ENCODE measurements at regions of chr16 and their contacts with region 1.

Region 1: GRCh38 chr16:11133344-11133943 is 122.6 kb downstream of the SOCS1 start:
- DNase-seq: peak; percentile 90
- H3K4me3 ChIP-seq: no peak overlapping the region
- H3K27ac ChIP-seq: peak overlapping the region; percentile 86
- H3K27me3 ChIP-seq: no peaks in the 10 kb centered on the region
- CTCF ChIP-seq: no peak

Region 2: DNA sequence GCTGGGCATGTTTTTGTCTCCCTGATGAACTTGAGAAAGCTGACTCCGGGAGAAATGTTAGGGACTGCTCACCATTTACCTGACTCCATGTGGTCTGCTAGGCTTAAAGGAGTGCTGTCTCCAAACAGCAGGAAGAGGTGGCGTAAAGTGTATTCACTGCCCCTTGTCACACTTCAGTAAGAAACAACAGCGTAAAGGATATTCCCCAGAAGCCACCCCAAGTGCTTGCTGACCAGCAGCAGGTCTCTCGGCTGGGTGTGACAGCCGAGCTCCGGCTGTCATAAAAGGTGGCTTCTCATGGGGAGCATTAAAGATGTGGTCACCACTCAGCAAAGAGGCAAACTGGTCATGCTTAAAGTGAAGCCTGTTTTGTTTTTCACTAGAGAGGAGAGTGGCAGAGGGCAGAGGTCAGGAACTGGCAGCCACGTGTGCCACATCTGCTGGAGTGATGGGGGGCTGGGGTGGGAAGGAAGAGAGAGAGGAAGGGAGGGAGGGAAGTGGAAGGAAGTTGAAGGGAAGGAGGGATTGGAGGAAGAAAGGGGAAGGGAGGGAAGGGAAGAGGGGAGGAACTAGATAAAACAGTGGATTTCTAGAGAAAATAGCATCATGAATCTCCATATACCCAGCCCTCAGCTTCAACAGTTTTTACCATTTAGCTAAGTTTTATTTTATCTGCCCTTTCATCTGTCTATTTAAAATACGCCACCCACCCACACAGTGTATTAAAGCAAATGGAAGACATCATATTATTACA is 69.8 kb before region 1 on chr16:
- CTCF ChIA-PET with region 1: no interaction called
- POLR2A ChIA-PET with region 1: interaction called, 18 read pairs
- DNase-seq: no peak
- H3K4me3 ChIP-seq: no peak overlapping the region
- H3K27ac ChIP-seq: peak overlapping the region; percentile 21
- H3K27me3 ChIP-seq: no peaks in the 10 kb centered on the region
- CTCF ChIP-seq: no peak

Region 3: DNA sequence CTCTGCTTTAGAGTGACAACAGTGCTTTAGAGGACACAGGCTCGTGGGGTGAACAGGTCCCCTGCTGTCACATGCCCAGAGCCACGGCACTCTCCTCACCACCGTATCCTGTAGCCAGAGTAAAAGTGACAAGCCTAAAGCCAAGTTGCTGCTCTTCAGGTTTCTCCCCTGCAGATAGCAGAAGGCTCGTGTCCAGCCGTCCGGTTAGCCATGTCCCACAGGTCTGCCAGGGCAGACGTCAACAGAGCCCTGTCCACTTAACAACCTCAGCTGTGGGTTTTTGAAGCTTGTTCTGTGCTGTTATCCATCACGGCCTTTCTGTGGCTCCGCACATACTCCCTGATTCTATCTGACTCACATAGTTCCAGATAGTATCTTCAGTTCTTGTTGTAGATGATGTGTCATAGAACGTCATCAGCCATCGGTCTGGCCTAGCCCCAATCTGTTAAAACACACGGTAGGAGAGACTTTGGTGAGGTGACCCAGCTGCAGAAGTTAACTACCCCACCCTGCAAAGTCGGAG is 21.9 kb after region 1 on chr16:
- CTCF ChIA-PET with region 1: no interaction called
- POLR2A ChIA-PET with region 1: no interaction called
- DNase-seq: peak; percentile 63
- H3K4me3 ChIP-seq: no peak overlapping the region
- H3K27ac ChIP-seq: peak overlapping the region; percentile 57
- H3K27me3 ChIP-seq: no peaks in the 10 kb centered on the region
- CTCF ChIP-seq: no peak

Measured in AG04450 (cell line).